ENCODE measurements at regions of chr22 and their contacts with region 1.

Region 1: GRCh38 chr22:17171313-17172171 is 12.5 kb upstream of the HDHD5 start:
- DNase-seq: peak; percentile 24
- H3K4me3 ChIP-seq: peak overlapping the region; percentile 65
- H3K27me3 ChIP-seq: no peaks in the 10 kb centered on the region; the same call in 1 of the 2 replicates
- CTCF ChIP-seq: peak; percentile 97

Region 2: DNA sequence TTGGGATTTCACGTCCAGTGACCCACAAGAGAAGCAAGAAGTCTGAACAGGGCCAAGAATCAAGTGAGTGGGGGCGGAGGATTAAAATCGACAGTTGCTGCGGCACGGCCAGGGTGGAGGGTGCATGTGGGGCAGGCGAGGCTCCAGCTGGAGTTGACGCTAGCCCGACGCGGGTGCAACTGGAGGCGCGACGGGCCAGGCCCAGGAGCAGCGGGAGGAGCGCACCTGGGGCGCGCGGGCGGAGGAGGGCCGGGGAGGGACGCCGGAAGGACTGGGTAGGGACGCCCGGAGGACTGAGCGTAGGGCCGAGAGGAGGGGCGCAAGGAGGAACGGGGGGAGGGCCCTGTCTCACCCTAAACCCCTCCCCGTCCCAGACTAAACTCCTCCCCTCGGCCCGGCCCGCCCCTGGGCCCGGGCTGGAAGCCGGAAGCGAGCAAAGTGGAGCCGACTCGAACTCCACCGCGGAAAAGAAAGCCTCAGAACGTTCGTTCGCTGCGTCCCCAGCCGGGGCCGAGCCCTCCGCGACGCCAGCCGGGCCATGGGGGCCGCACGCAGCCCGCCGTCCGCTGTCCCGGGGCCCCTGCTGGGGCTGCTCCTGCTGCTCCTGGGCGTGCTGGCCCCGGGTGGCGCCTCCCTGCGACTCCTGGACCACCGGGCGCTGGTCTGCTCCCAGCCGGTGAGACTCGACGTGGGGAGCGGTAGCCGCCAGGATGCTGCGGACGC is 86.8 kb before region 1 on chr22 and contains the start of gene IL17RA:
- CTCF ChIA-PET with region 1: interaction called, 24 read pairs
- POLR2A ChIA-PET with region 1: interaction called, 3 read pairs
- DNase-seq: no peak
- H3K4me3 ChIP-seq: peak within 1 kb of the TSS; percentile 77
- H3K27me3 ChIP-seq: no peaks in the 10 kb centered on the region
- CTCF ChIP-seq: no peak
- polyA plus RNA-seq, gene IL17RA: 20.7 and 27.0 TPM in 2 replicates

Region 3: GRCh38 chr22:17143826-17144225 is 27.7 kb before region 1 on chr22:
- CTCF ChIA-PET with region 1: interaction called, 16 read pairs
- POLR2A ChIA-PET with region 1: no interaction called
- DNase-seq: no peak
- H3K4me3 ChIP-seq: no peak overlapping the region
- H3K27me3 ChIP-seq: no peaks in the 10 kb centered on the region
- CTCF ChIP-seq: no peak

Region 4: DNA sequence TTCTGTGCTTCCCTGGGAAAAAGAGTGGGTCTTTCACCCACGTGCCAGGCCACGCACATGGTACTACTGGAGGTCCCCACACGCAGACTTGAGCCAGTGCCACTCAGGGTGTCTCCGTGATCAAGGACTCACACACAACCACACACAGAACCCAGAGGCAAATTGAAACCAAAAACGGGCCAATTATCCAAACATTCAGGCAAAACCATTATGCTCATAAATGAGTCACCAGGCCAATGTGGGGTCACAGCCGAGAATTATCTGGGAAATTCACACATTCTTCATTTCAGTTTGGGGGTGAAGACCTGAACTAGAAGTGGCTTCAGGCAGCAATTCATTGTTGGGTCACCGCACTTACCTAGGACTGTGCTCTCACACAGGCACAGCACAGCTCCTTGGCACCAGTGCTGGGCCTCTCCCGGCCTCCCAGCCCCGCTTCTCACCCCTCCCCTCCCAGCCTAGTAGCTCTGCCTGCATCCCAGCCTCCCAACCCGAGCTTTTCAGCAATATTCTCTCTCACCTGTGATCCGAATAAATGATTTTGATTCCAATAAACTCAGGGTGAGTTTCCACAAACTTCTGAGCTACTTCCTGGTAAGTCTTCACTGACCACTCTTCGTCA is 19.7 kb after region 1 on chr22:
- CTCF ChIA-PET with region 1: interaction called, 48 read pairs
- POLR2A ChIA-PET with region 1: no interaction called
- DNase-seq: peak; percentile 51
- H3K4me3 ChIP-seq: 0 out of 2 replicates have a peak overlapping the region, but pooled peaks have one; percentile 5
- H3K27me3 ChIP-seq: no peaks in the 10 kb centered on the region
- CTCF ChIP-seq: no peak

Region 5: GRCh38 chr22:17319546-17319945 is 148.0 kb after region 1 on chr22:
- CTCF ChIA-PET with region 1: no interaction called
- POLR2A ChIA-PET with region 1: no interaction called
- DNase-seq: no peak
- H3K4me3 ChIP-seq: no peak overlapping the region
- H3K27me3 ChIP-seq: no peaks in the 10 kb centered on the region
- CTCF ChIP-seq: no peak

Region 6: GRCh38 chr22:17501679-17502285 is 330.2 kb after region 1 on chr22:
- CTCF ChIA-PET with region 1: interaction called, 38 read pairs
- POLR2A ChIA-PET with region 1: interaction called, 3 read pairs
- DNase-seq: peak; percentile 4
- H3K4me3 ChIP-seq: no peak overlapping the region
- H3K27me3 ChIP-seq: no peaks in the 10 kb centered on the region
- CTCF ChIP-seq: peak; percentile 57